Panc1 (cell line): ENCODE measurements at regions of chr9 and their contacts with region 1.

Region 1: GRCh38 chr9:4315582-4316215 is 15.8 kb upstream of the GLIS3 start:
- DNase-seq: no peak
- ATAC-seq: peak; percentile 88
- H3K4me3 ChIP-seq: no peak overlapping the region
- H3K27ac ChIP-seq: no peak overlapping the region
- H3K4me1 ChIP-seq: no peaks in the 10 kb centered on the region
- H3K27me3 ChIP-seq: no peaks in the 10 kb centered on the region
- CTCF ChIP-seq: peak; percentile 74

Region 2: DNA sequence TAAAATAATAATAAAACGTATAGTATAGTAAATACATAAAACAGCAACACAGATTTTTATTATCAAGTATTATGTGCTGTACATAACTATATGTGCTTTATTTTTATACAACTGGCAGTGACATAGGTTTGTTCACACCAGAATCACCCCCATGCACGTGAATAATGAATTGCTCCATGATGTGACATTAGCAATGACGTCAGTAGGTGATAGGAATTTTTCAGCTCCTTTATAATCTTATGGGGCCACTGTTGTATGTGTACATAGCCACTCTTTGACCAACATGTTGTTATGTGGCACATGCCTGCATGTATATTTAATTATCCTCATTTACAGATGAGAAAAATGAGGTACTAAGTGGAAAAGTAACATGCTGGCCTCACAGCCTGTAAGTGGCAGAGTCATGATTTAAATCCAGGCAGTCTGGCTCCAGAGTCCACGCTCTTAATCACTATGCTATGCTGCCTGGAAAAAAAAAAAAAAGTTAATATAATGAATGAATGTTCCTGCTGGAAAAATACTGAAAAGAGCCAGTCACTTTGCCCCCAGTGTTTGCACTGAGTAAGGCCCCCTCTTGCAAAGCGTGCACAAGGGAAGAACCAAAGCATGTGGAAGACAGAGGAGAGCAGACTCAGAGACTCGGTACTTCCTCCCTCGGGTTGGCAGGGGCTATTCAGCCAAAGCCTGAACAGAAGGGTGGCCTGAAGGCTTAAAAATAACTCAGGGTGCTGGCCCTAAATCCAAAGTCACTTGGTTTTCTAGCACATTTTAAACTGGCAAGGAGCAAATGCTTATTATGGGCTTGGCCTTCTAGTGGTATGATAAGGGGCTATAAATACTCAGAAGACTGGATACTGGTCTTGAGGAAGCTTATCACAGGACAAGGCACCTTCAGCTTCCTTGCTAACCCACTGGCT is 222.6 kb before region 1 on chr9:
- CTCF ChIA-PET with region 1: no interaction called
- POLR2A ChIA-PET with region 1: no interaction called
- in situ Hi-C with region 1: no loop called
- intact Hi-C with region 1: no loop called
- DNase-seq: no peak
- ATAC-seq: no peak
- H3K4me3 ChIP-seq: no peak overlapping the region
- H3K27ac ChIP-seq: no peak overlapping the region
- H3K4me1 ChIP-seq: no peaks in the 10 kb centered on the region
- H3K27me3 ChIP-seq: no peaks in the 10 kb centered on the region
- CTCF ChIP-seq: no peak

Region 3: DNA sequence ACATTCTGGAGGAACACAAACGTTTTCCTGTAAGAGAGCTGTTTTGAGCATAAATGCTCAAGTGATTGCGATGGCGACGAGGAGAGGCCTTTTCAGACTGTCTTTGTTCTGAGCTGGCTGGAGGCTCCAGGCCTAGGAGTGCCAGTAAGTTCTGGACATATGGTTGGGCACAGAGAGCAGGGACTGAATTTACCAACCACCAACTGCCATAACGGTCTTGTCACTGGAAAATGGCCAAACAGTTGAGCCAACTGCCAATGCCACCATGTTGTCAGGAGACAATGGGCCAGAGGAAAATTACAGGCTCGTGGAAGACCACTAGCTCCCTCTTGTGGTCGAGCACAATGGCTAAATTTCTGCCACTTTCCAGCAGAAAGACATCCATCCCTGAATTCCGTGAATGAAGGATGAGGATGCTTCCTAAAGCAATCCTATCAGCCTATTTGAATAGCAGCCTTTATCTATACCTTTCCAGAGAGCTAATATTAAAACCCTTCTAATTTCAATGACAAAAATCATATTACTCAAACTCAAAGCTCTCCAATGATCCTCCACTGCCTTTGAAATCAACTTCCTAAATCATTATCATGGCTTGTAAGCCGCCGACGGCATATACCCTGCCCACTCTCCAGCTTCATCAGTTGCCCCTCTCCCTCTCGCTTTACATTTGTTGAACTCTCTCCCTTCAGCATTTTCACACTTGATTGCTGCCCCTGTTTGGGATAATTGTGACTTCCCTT is 51.1 kb after region 1 on chr9:
- CTCF ChIA-PET with region 1: no interaction called
- POLR2A ChIA-PET with region 1: no interaction called
- in situ Hi-C with region 1: no loop called
- intact Hi-C with region 1: loop called (anchors 5 kb)
- DNase-seq: no peak
- ATAC-seq: no peak
- H3K4me3 ChIP-seq: no peak overlapping the region
- H3K27ac ChIP-seq: no peak overlapping the region
- H3K4me1 ChIP-seq: no peaks in the 10 kb centered on the region
- H3K27me3 ChIP-seq: no peaks in the 10 kb centered on the region
- CTCF ChIP-seq: peak; percentile 56

Region 4: GRCh38 chr9:4657426-4658159 is 341.9 kb after region 1 on chr9:
- CTCF ChIA-PET with region 1: no interaction called
- POLR2A ChIA-PET with region 1: no interaction called
- in situ Hi-C with region 1: no loop called
- intact Hi-C with region 1: no loop called
- DNase-seq: no peak
- ATAC-seq: no peak
- H3K4me3 ChIP-seq: no peak overlapping the region
- H3K27ac ChIP-seq: no peak overlapping the region
- H3K4me1 ChIP-seq: no peaks in the 10 kb centered on the region
- H3K27me3 ChIP-seq: no peaks in the 10 kb centered on the region
- CTCF ChIP-seq: no peak